HEK293 (cell line): ENCODE measurements at regions of chr1 and their contacts with region 1.

Region 1: GRCh38 chr1:89762779-89763648 is 57.8 kb upstream of the LRRC8D start:
- H3K4me3 ChIP-seq: peak overlapping the region; percentile 35
- H3K27ac ChIP-seq: no peak overlapping the region; the same call in 1 of the 2 replicates
- H3K4me1 ChIP-seq: no peaks in the 10 kb centered on the region
- CTCF ChIP-seq: peak; percentile 97

Region 2: GRCh38 chr1:88998716-88999115 is 764.3 kb before region 1 on chr1:
- CTCF ChIA-PET with region 1: interaction called, 11 read pairs
- POLR2A ChIA-PET with region 1: no interaction called
- H3K4me3 ChIP-seq: no peak overlapping the region
- H3K27ac ChIP-seq: no peak overlapping the region
- H3K4me1 ChIP-seq: no peaks in the 10 kb centered on the region
- CTCF ChIP-seq: 0 out of 2 replicates have a peak, but pooled peaks have one; percentile 13

Region 3: GRCh38 chr1:89590415-89591080 is 172.5 kb before region 1 on chr1:
- CTCF ChIA-PET with region 1: interaction called, 17 read pairs
- POLR2A ChIA-PET with region 1: no interaction called
- H3K4me3 ChIP-seq: no peak overlapping the region
- H3K27ac ChIP-seq: no peak overlapping the region
- H3K4me1 ChIP-seq: no peaks in the 10 kb centered on the region
- CTCF ChIP-seq: no peak

Region 4: GRCh38 chr1:89603651-89604413 is 159.2 kb before region 1 on chr1:
- CTCF ChIA-PET with region 1: interaction called, 17 read pairs
- POLR2A ChIA-PET with region 1: no interaction called
- H3K4me3 ChIP-seq: no peak overlapping the region
- H3K27ac ChIP-seq: no peak overlapping the region
- H3K4me1 ChIP-seq: no peaks in the 10 kb centered on the region
- CTCF ChIP-seq: no peak

Region 5: GRCh38 chr1:89627596-89627962 is 135.4 kb before region 1 on chr1:
- CTCF ChIA-PET with region 1: interaction called, 33 read pairs
- POLR2A ChIA-PET with region 1: interaction called, 4 read pairs
- H3K4me3 ChIP-seq: no peak overlapping the region
- H3K27ac ChIP-seq: no peak overlapping the region
- H3K4me1 ChIP-seq: no peaks in the 10 kb centered on the region
- CTCF ChIP-seq: no peak

Region 6: GRCh38 chr1:89719502-89720306 is 43.3 kb before region 1 on chr1:
- CTCF ChIA-PET with region 1: interaction called, 17 read pairs
- POLR2A ChIA-PET with region 1: no interaction called
- H3K4me3 ChIP-seq: no peak overlapping the region
- H3K27ac ChIP-seq: 0 out of 2 replicates have a peak overlapping the region, but pooled peaks have one; percentile 39
- H3K4me1 ChIP-seq: peaks cover 22% of the 10 kb centered on the region
- CTCF ChIP-seq: no peak

Region 7: DNA sequence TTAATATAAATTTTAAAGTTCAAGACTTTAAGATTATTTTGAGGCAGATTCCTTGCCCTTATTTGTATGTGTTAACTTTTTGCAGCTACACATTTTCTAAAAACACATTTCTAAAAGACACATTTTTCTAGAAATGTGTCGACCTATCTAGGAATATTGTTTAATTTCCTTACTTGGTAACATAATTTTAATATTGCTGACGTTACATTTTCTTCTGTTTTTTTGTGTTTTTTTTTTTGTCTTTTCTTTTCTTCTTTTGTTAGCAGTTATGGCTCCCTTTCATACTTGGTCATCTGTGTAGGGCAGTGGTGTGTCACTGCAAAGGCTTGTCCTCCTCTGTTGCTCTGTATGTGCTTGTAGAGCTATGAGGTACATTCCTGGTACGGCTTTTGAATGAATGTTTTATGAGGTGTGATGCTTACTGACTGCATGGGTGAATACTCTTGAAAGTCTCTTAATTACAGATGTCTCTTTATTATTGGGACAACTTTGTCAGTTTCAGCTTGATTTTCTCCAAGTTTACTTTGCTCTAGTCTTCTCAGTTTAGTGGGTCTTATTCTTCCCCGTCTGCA is 87.9 kb after region 1 on chr1:
- CTCF ChIA-PET with region 1: no interaction called
- POLR2A ChIA-PET with region 1: no interaction called
- H3K4me3 ChIP-seq: no peak overlapping the region
- H3K27ac ChIP-seq: no peak overlapping the region
- H3K4me1 ChIP-seq: no peaks in the 10 kb centered on the region
- CTCF ChIP-seq: no peak

Region 8: DNA sequence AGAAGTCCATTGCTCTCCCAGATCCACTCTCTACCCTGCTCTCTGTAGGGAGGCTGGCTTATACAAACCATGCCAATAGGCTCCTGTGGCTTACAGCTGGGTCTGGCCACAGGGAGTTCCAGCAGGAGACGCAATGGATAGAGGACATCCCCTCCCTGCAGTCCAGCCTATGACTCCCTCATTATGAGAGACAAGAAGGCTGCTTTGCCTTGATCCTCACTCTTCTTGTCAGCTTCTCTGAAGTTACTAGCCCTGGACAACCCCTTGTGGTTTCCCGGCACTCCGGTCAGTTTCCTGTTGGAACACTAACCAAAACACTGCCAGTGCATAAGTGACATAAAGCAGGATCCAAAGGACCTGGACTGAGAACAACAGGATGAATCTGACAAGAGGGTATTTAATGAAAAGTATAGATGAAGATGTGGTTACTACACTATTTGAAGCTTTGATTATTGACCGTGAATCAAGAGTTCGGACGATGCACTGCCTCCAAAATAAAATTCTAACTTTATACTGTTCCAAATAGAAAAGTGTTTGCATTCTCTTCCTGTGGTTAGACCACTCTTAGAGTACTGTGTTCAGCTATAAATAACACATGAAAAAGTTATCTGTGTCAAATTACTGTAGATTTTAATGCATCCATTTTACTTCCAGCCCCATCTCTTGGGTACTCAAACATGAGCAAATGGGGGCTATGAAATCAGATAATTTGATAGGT is 199.2 kb after region 1 on chr1:
- CTCF ChIA-PET with region 1: no interaction called
- POLR2A ChIA-PET with region 1: no interaction called
- H3K4me3 ChIP-seq: no peak overlapping the region
- H3K27ac ChIP-seq: no peak overlapping the region
- H3K4me1 ChIP-seq: no peaks in the 10 kb centered on the region
- CTCF ChIP-seq: no peak